GM10248 (cell line): ENCODE measurements at regions of chr10 and their contacts with region 1.

Region 1: GRCh38 chr10:60646966-60647796 is 131.1 kb upstream of the CDK1 start:
- DNase-seq: peak; percentile 25
- CTCF ChIP-seq: peak; percentile 68

Region 2: GRCh38 chr10:60444494-60445064 is 202.6 kb before region 1 on chr10:
- CTCF ChIA-PET with region 1: interaction called, 13 read pairs
- POLR2A ChIA-PET with region 1: no interaction called
- DNase-seq: no peak
- CTCF ChIP-seq: no peak

Region 3: DNA sequence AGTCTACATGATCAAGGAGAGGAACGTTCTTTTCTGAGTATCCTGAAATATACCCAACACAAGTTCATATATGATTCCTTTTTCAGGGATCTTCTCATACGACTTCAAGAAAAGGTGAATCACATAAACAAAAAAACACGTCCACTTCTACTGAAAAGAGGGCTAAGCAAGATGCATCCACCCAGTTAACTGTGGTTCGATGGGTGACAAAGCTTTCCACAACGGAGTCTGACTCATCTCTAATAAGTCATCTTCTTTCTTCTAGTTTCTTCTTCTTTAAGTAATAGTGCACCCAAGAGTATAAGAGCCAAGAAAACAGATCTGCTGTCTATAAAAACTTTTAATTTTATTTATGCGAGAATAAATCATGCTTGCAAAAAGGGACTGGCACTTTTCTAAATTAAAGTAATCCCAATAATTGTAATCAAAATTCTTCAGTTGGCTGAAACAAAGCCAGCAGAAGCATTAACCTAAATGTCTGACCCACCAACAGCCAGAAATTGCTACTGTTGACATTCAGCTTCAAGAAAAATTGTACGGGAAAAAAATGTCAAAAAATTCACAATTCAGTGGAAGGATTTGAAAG is 110.6 kb before region 1 on chr10:
- CTCF ChIA-PET with region 1: no interaction called
- POLR2A ChIA-PET with region 1: no interaction called
- DNase-seq: no peak
- CTCF ChIP-seq: no peak

Region 4: GRCh38 chr10:60629332-60629731 is 17.8 kb before region 1 on chr10:
- CTCF ChIA-PET with region 1: interaction called, 21 read pairs
- POLR2A ChIA-PET with region 1: no interaction called
- DNase-seq: no peak
- CTCF ChIP-seq: no peak

Region 5: GRCh38 chr10:60848126-60848525 is 200.9 kb after region 1 on chr10:
- CTCF ChIA-PET with region 1: no interaction called
- POLR2A ChIA-PET with region 1: no interaction called
- DNase-seq: no peak
- CTCF ChIP-seq: no peak